Activated CD8-positive, alpha-beta memory T cell treated with anti-CD3 and anti-CD28 coated beads, Interleukin-2, amount 10 ng/mL, durations not matched to agents 7 days and 5 days (primary cell): ENCODE measurements at regions of chr14 and their contacts with region 1.

Region 1: GRCh38 chr14:100234511-100234910 is 4.4 kb upstream of the YY1 start:
- DNase-seq: peak; percentile 48
- ATAC-seq: no peak
- H3K4me3 Mint-ChIP-seq: no peak overlapping the region
- H3K27ac Mint-ChIP-seq: peak overlapping the region; percentile 71
- H3K4me1 Mint-ChIP-seq: peaks cover 38% of the 10 kb centered on the region
- H3K27me3 Mint-ChIP-seq: no peaks in the 10 kb centered on the region

Region 2: DNA sequence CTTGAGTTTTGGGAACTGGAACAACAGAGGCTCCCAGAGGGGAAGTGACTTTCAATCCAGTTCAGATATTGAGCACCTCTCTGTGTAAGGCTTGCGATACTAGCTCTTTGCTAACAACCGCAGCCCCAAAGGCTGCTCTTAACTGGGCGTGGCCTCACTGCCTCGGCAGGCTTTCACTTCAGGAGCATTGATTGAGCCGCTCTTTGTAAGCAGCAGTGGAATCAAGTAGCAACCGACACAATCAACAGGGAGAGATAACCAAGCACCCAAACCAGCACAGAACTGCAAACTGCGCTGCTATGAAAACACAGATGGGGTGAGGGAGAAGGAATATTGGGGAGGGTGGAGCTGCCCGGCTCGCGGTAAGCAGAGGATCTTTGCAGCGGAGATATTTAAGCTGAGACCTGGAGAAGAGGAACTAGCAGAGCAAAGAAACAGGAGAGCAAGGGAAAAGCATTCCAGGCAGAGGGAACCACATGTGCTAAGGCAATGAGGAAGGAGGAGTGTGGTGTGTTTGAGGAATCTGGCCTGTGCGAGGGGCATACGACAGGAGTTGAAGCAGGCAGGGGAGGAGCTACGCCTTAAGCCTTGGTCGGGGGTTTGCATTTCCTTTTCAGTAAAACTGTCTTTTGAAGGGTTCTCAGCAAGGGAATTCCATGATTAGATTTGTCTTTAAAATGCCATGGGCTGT is 12.8 kb before region 1 on chr14:
- CTCF ChIA-PET with region 1: interaction called, 53 read pairs
- DNase-seq: peak; percentile 89
- ATAC-seq: peak; percentile 93
- H3K4me3 Mint-ChIP-seq: no peak overlapping the region
- H3K27ac Mint-ChIP-seq: no peak overlapping the region
- H3K4me1 Mint-ChIP-seq: peaks cover 33% of the 10 kb centered on the region
- H3K27me3 Mint-ChIP-seq: no peaks in the 10 kb centered on the region